MCF 10A (cell line): ENCODE measurements at regions of chrX and their contacts with region 1.

Region 1: DNA sequence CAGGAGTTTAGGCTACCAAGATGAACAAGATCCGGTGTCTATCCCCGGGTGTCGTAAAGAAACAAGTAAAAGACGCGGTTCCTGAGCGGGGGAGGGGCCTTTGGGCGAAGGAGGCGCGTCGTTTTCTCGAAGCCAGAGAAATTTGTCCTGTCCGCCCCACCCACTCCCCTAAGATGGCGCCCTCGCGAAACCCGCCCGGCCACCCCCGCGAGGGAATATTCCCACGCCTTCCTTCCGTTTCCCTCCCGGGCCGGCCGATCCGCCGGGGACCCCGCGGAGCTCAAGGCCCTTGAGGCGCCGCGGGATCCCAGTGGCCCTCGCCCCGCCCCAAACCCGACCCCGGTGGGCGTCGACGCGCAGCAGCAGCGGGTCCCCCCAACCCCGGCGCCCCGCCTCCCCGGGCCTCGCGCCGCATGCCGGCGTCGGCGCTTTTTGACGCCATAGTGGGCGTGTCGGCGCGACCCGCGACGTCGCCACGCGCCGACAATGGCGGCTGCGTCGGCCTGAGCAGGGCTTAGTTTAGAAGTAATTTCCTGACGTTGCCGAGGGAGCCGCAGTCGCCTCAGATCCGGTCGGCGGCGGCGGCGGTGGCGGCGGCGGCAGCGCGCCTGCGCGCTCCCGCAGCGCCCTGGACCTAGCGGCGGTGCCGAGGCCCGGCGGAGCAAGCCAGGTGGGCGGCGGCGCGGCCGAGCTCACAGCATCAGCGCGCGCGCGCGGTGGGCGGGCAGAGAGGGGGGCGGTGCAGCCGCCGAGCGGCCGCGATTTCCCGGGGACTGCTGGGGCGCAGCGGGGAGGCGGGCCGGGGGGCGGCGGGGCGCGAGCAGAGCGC is at the start of gene HTATSF1:
- DNase-seq: peak; percentile 87
- H3K4me3 Mint-ChIP-seq: peak within 1 kb of the TSS; percentile 81
- H3K27ac Mint-ChIP-seq: peak within 1 kb of the TSS; percentile 89
- H3K4me1 Mint-ChIP-seq: no peaks in the 10 kb centered on the region
- H3K27me3 Mint-ChIP-seq: peaks cover 22% of the 10 kb centered on the region
- CTCF ChIP-seq: no peak
- total RNA-seq, gene HTATSF1: 17.6 and 23.3 TPM in 2 replicates

Region 2: DNA sequence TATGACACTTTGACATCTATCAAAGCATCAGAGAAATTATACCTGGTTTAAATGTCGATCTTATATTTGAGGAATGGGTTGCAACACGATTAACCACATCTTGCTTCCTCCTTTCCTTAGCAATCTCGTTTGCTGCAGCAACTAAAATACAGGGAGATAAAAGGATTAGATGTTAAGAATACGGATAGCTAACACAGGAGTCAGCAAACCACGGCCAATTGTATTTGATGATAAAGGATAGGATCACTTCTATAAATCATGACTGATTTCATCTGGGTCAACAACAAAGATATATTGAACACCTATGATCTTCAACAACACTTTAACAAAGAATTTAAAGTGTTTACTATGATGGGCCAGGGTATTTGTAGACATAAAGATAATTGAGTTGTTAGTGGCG is 250.8 kb before region 1 on chrX:
- CTCF ChIA-PET with region 1: no interaction called
- POLR2A ChIA-PET with region 1: no interaction called
- intact Hi-C with region 1: loop called (anchors 2 kb)
- DNase-seq: no peak
- H3K4me3 Mint-ChIP-seq: no peak overlapping the region
- H3K27ac Mint-ChIP-seq: no peak overlapping the region
- H3K4me1 Mint-ChIP-seq: no peaks in the 10 kb centered on the region
- H3K27me3 Mint-ChIP-seq: peaks cover 60% of the 10 kb centered on the region
- CTCF ChIP-seq: no peak

Region 3: GRCh38 chrX:136397001-136397400 is 100.0 kb before region 1 on chrX:
- CTCF ChIA-PET with region 1: no interaction called
- POLR2A ChIA-PET with region 1: no interaction called
- intact Hi-C with region 1: no loop called
- DNase-seq: peak; percentile 38
- H3K4me3 Mint-ChIP-seq: no peak overlapping the region
- H3K27ac Mint-ChIP-seq: no peak overlapping the region
- H3K4me1 Mint-ChIP-seq: peaks cover 8% of the 10 kb centered on the region
- H3K27me3 Mint-ChIP-seq: peaks cover 34% of the 10 kb centered on the region
- CTCF ChIP-seq: no peak

Region 4: DNA sequence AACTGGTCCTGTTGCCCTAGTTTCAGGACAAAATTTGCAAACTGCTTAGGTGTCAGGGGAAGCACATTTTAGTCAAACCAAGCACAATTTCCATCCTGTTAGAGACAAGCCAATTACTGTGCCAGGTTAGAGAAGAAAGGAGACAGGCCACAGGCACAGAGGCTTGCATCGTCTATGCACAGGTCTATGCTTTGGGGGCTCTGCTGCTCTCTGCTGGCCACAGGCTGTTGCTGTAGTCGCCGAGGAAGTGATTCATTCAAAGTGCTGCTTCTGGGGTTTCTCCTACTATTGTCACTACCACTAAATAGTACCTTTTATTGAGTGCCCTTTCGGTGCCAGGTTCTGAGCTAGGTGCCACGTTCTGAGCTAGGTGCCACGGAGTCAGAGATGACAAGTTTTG is 80.6 kb after region 1 on chrX:
- CTCF ChIA-PET with region 1: no interaction called
- POLR2A ChIA-PET with region 1: no interaction called
- intact Hi-C with region 1: loop called (anchors 1 kb)
- DNase-seq: peak; percentile 51
- H3K4me3 Mint-ChIP-seq: no peak overlapping the region
- H3K27ac Mint-ChIP-seq: no peak overlapping the region
- H3K4me1 Mint-ChIP-seq: no peaks in the 10 kb centered on the region
- H3K27me3 Mint-ChIP-seq: peaks cover 35% of the 10 kb centered on the region
- CTCF ChIP-seq: peak; percentile 56